A549 (cell line): ENCODE measurements at regions of chr11 and their contacts with region 1.

Region 1: DNA sequence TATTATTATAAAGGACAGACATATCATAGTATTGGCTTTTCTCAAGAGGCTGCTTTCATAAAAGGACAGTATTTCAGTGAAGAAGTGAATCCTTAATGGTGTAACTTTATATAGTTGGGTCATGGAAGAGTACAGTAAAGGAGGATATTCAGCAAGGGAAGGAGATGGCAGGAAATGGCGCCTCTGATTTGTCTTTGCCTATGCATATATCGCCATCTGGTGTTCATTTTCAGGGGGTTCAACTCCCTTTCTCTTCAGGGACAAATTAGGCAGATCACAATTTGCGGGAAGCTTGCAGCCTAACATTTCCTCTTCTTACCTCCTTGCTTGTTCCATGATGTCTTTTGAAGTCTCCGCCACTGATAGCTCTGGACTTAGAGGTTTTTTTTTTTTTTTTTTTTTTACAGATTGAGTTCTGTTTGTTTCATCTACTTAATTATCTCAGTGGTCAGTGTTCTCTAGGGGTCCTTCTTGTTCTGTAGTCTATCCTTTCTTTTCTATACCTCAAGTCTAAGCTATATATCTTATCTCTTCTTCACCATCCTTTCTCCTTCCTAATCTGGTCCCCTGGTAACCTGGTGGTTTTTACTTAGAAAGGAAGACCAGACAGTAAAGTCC is 21.8 kb upstream of the RRM1 start:
- DNase-seq: peak; percentile 67 to 80
- ATAC-seq: peak; percentile 90 to 97
- H3K4me3 ChIP-seq: no peak overlapping the region
- H3K27ac ChIP-seq: no peak overlapping the region
- H3K4me1 ChIP-seq: no peaks in the 10 kb centered on the region
- CTCF ChIP-seq: peak; percentile 93
- EP300 ChIP-seq: no peak
- POLR2A ChIP-seq: no peak
- RAD21 ChIP-seq: peak; percentile 96 to 98

Region 2: GRCh38 chr11:3817181-3817800 is 255.5 kb before region 1 on chr11:
- CTCF ChIA-PET with region 1: interaction called, 18 read pairs
- POLR2A ChIA-PET with region 1: no interaction called
- DNase-seq: no peak
- ATAC-seq: no peak
- H3K4me3 ChIP-seq: no peak overlapping the region
- H3K27ac ChIP-seq: no peak overlapping the region
- H3K4me1 ChIP-seq: no peaks in the 10 kb centered on the region
- CTCF ChIP-seq: no peak
- EP300 ChIP-seq: no peak
- POLR2A ChIP-seq: no peak
- RAD21 ChIP-seq: no peak

Region 3: GRCh38 chr11:3873712-3874349 is 198.9 kb before region 1 on chr11:
- CTCF ChIA-PET with region 1: interaction called, 21 read pairs
- POLR2A ChIA-PET with region 1: no interaction called
- DNase-seq: no peak
- ATAC-seq: no peak
- H3K4me3 ChIP-seq: no peak overlapping the region
- H3K27ac ChIP-seq: no peak overlapping the region
- H3K4me1 ChIP-seq: peaks cover 17% of the 10 kb centered on the region
- CTCF ChIP-seq: no peak
- EP300 ChIP-seq: no peak
- POLR2A ChIP-seq: no peak
- RAD21 ChIP-seq: no peak

Region 4: GRCh38 chr11:3896644-3897043 is 176.1 kb before region 1 on chr11:
- CTCF ChIA-PET with region 1: interaction called, 12 read pairs
- POLR2A ChIA-PET with region 1: no interaction called
- DNase-seq: no peak
- ATAC-seq: no peak
- H3K4me3 ChIP-seq: no peak overlapping the region
- H3K27ac ChIP-seq: no peak overlapping the region
- H3K4me1 ChIP-seq: peaks cover 24% of the 10 kb centered on the region
- CTCF ChIP-seq: no peak
- EP300 ChIP-seq: no peak
- POLR2A ChIP-seq: no peak
- RAD21 ChIP-seq: no peak

Region 5: GRCh38 chr11:3959015-3959919 is 113.5 kb before region 1 on chr11:
- CTCF ChIA-PET with region 1: interaction called, 12 read pairs
- POLR2A ChIA-PET with region 1: no interaction called
- DNase-seq: peak; percentile 53 to 54
- ATAC-seq: peak; percentile 89 to 92
- H3K4me3 ChIP-seq: 0 out of 3 replicates have a peak overlapping the region, but pooled peaks have one; percentile 7
- H3K27ac ChIP-seq: peak overlapping the region; percentile 40 to 51; a peak in 5 of 6 replicates
- H3K4me1 ChIP-seq: peaks cover 39% of the 10 kb centered on the region
- CTCF ChIP-seq: peak; percentile 34; the same call in 2 of the 3 replicates
- EP300 ChIP-seq: no peak
- POLR2A ChIP-seq: no peak
- RAD21 ChIP-seq: peak; percentile 16 to 45; a peak in 2 of 5 replicates

Region 6: GRCh38 chr11:4060182-4060923 is 12.4 kb before region 1 on chr11:
- CTCF ChIA-PET with region 1: interaction called, 55 read pairs
- POLR2A ChIA-PET with region 1: no interaction called
- DNase-seq: no peak
- ATAC-seq: no peak
- H3K4me3 ChIP-seq: no peak overlapping the region
- H3K27ac ChIP-seq: no peak overlapping the region
- H3K4me1 ChIP-seq: no peaks in the 10 kb centered on the region
- CTCF ChIP-seq: no peak
- EP300 ChIP-seq: no peak
- POLR2A ChIP-seq: no peak
- RAD21 ChIP-seq: no peak

Region 7: GRCh38 chr11:4118107-4118506 is 45.3 kb after region 1 on chr11:
- CTCF ChIA-PET with region 1: no interaction called
- POLR2A ChIA-PET with region 1: no interaction called
- DNase-seq: no peak
- ATAC-seq: no peak
- H3K4me3 ChIP-seq: no peak overlapping the region
- H3K27ac ChIP-seq: no peak overlapping the region
- H3K4me1 ChIP-seq: no peaks in the 10 kb centered on the region
- CTCF ChIP-seq: no peak
- EP300 ChIP-seq: no peak
- POLR2A ChIP-seq: no peak
- RAD21 ChIP-seq: no peak